Calu3 (cell line): ENCODE measurements at regions of chr15 and their contacts with region 1.

Region 1: GRCh38 chr15:62231856-62232255 is 66.8 kb upstream of the C2CD4B start:
- DNase-seq: no peak
- H3K4me3 Mint-ChIP-seq: no peak overlapping the region
- H3K27ac Mint-ChIP-seq: no peak overlapping the region
- H3K4me1 Mint-ChIP-seq: no peaks in the 10 kb centered on the region
- H3K27me3 Mint-ChIP-seq: no peaks in the 10 kb centered on the region
- CTCF ChIP-seq: no peak

Region 2: GRCh38 chr15:62075595-62076282 is 156.1 kb before region 1 on chr15:
- CTCF ChIA-PET with region 1: no interaction called
- intact Hi-C with region 1: no loop called
- DNase-seq: peak; percentile 80
- H3K4me3 Mint-ChIP-seq: peak overlapping the region; percentile 46
- H3K27ac Mint-ChIP-seq: peak overlapping the region; percentile 68
- H3K4me1 Mint-ChIP-seq: peaks cover 20% of the 10 kb centered on the region
- H3K27me3 Mint-ChIP-seq: no peaks in the 10 kb centered on the region
- CTCF ChIP-seq: no peak

Region 3: GRCh38 chr15:62173215-62173614 is 58.6 kb before region 1 on chr15:
- CTCF ChIA-PET with region 1: no interaction called
- intact Hi-C with region 1: no loop called
- DNase-seq: no peak
- H3K4me3 Mint-ChIP-seq: no peak overlapping the region
- H3K27ac Mint-ChIP-seq: no peak overlapping the region
- H3K4me1 Mint-ChIP-seq: peaks cover 20% of the 10 kb centered on the region
- H3K27me3 Mint-ChIP-seq: no peaks in the 10 kb centered on the region
- CTCF ChIP-seq: no peak

Region 4: DNA sequence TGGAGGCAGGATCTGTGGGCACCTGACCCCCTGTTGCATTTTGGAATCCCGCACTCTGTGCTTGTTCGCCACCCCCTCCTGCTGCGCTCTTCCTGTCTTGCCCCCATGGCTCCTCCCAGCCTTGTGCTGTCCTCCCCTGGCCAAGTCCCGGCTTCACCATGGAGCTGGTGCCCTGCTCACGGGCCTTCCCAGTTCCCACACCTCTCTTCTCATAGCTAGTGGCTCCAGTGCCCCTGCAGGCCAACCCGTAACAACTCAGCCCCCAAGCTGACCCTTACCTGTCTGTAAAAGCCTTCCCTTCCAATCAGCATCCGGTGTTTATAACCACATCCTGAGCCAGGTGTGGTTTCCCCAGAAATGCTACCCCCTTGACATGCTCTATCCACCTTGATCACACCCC is 340.9 kb after region 1 on chr15:
- CTCF ChIA-PET with region 1: interaction called, 14 read pairs
- intact Hi-C with region 1: no loop called
- DNase-seq: no peak
- H3K4me3 Mint-ChIP-seq: no peak overlapping the region
- H3K27ac Mint-ChIP-seq: no peak overlapping the region
- H3K4me1 Mint-ChIP-seq: peaks cover 28% of the 10 kb centered on the region
- H3K27me3 Mint-ChIP-seq: peaks cover 37% of the 10 kb centered on the region
- CTCF ChIP-seq: no peak